ENCODE measurements at regions of chr19 and their contacts with region 1.

Region 1: DNA sequence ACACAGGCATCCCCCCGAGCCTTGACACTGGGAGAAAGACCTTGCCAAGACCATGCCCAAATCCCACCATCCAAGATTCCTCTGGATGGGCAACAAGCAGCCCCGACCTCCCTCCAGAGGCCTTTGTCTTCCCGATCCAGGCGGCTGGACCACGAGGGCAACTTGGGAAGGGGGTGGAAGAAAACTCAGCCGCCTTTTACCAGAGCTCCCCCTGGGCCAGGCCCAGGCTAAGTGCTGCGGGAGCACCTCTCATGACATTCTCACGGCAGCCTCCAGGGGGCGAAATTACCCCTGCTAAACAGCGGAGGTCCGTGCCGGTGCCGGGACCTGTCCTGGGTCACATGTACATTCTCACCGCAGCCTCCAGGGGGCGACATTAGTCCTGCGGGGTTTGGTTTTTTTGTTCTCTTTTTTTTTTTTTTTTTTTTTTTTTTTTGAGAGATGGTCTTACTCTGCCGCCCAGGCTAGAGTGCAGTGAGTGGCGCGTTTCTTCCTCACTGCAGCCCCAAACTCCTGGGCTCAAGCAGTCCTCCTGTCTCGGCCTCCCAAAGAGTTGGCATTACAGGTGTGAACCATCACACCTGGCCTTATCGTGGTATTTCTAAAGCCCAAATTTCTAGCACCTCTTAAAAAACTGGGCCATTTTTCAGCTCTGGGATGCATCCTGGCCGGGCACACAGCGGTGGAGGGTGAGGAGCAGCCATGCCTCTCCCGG is 2.1 kb upstream of the RSPH6A start:
- DNase-seq: peak; percentile 97
- ATAC-seq: peak; percentile 98
- H3K4me3 Mint-ChIP-seq: no peak overlapping the region
- H3K27ac Mint-ChIP-seq: no peak overlapping the region
- H3K4me1 Mint-ChIP-seq: peaks cover 6% of the 10 kb centered on the region
- H3K27me3 Mint-ChIP-seq: no peaks in the 10 kb centered on the region

Region 2: DNA sequence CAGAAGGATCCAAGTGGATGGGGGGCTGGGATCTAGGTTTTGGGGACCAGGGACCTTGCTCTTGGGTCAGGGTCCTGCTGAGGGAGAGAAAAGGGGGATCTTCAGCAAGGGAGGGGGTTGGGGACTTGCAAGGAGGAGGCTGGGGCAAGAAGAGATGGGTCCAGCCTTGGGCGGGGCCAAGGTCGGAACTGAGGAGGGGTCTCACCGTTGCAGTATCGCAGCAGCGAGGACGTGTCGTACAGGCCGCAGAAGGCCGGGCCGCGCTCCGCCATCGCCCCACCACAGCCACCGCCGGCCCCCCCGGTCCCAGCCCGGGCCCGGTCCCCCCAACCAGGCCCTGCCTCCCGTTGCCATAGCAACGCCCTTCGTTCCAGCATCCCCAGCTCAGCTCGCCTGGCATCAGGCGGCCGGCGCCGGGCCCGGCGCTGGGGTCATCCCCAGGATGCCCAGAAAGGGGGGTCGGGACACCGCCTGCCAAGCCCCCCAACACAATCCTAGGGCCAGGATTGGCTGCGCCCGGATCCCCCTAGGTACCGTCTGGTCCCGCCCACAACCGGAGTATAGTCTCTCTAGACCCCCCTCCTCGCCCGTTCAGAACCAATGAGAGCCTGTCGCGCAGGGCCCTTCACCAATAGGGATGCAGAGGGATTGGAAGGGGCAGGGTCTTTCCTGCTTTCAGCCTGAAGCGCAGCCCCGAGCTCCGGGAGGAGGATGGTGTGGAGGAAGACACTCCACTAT is 171.9 kb before region 1 on chr19:
- CTCF ChIA-PET with region 1: no interaction called
- DNase-seq: peak; percentile 93
- ATAC-seq: peak; percentile 57
- H3K4me3 Mint-ChIP-seq: peak overlapping the region; percentile 78
- H3K27ac Mint-ChIP-seq: peak overlapping the region; percentile 79
- H3K4me1 Mint-ChIP-seq: peaks cover 36% of the 10 kb centered on the region
- H3K27me3 Mint-ChIP-seq: no peaks in the 10 kb centered on the region

Region 3: DNA sequence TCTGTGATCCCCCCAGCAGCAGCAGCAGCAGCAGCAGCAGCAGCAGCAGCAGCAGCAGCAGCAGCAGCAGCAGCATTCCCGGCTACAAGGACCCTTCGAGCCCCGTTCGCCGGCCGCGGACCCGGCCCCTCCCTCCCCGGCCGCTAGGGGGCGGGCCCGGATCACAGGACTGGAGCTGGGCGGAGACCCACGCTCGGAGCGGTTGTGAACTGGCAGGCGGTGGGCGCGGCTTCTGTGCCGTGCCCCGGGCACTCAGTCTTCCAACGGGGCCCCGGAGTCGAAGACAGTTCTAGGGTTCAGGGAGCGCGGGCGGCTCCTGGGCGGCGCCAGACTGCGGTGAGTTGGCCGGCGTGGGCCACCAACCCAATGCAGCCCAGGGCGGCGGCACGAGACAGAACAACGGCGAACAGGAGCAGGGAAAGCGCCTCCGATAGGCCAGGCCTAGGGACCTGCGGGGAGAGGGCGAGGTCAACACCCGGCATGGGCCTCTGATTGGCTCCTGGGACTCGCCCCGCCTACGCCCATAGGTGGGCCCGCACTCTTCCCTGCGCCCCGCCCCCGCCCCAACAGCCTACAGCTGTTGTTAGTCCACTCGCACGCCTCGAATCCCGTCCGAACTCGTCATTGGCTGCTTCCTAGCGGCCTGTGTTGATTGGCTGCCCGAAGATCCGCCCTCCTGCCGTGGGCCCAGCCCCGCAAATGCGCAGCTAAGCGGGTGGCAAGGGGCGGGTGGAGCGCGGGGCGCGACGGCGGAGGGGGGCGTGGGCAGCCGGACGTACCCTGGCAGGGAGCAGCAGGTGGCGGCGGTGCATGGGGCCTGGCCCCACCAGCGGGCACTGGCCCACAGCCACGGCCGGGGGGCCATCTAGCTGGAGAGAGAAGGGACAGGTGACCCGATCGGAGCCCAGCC is 46.7 kb before region 1 on chr19:
- CTCF ChIA-PET with region 1: interaction called, 41 read pairs
- DNase-seq: peak; percentile 92
- ATAC-seq: peak; percentile 73
- H3K4me3 Mint-ChIP-seq: peak overlapping the region; percentile 78
- H3K27ac Mint-ChIP-seq: peak overlapping the region; percentile 84
- H3K4me1 Mint-ChIP-seq: peaks cover 13% of the 10 kb centered on the region
- H3K27me3 Mint-ChIP-seq: peaks cover 12% of the 10 kb centered on the region

Region 4: GRCh38 chr19:45798995-45799517 is 18.1 kb before region 1 on chr19:
- CTCF ChIA-PET with region 1: interaction called, 27 read pairs
- DNase-seq: peak; percentile 64
- ATAC-seq: peak; percentile 82
- H3K4me3 Mint-ChIP-seq: no peak overlapping the region
- H3K27ac Mint-ChIP-seq: no peak overlapping the region
- H3K4me1 Mint-ChIP-seq: peaks cover 6% of the 10 kb centered on the region
- H3K27me3 Mint-ChIP-seq: peaks cover 42% of the 10 kb centered on the region

Region 5: DNA sequence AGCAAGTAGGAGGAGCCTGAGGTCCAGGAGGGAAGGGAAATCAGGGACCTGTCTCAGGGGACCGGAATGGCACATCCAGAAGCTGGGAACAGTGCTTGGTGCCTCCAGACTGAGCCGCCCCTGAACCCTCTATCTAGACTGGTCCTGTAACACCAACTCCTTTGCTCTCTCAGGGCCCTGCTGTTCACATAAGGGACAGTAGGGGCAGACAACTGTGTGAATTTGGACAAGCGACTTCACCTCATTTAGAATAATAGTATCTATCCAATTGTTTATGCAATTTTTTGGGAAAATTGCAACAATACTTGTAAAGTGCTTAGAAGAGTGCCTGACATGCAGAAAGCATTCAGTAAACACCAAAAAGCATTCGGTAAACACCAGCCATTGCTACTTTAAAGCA is 31.8 kb after region 1 on chr19:
- CTCF ChIA-PET with region 1: interaction called, 11 read pairs
- DNase-seq: no peak
- ATAC-seq: no peak
- H3K4me3 Mint-ChIP-seq: no peak overlapping the region
- H3K27ac Mint-ChIP-seq: no peak overlapping the region
- H3K4me1 Mint-ChIP-seq: no peaks in the 10 kb centered on the region
- H3K27me3 Mint-ChIP-seq: no peaks in the 10 kb centered on the region

Region 6: GRCh38 chr19:45862564-45863334 is 45.6 kb after region 1 on chr19 and contains the start of gene SYMPK:
- CTCF ChIA-PET with region 1: interaction called, 16 read pairs
- DNase-seq: peak; percentile 100
- ATAC-seq: peak; percentile 96
- H3K4me3 Mint-ChIP-seq: peak within 1 kb of the TSS; percentile 98
- H3K27ac Mint-ChIP-seq: peak within 1 kb of the TSS; percentile 99
- H3K4me1 Mint-ChIP-seq: peaks cover 36% of the 10 kb centered on the region
- H3K27me3 Mint-ChIP-seq: peaks cover 34% of the 10 kb centered on the region
- total RNA-seq, gene SYMPK: 119 to 125 TPM

Region 7: DNA sequence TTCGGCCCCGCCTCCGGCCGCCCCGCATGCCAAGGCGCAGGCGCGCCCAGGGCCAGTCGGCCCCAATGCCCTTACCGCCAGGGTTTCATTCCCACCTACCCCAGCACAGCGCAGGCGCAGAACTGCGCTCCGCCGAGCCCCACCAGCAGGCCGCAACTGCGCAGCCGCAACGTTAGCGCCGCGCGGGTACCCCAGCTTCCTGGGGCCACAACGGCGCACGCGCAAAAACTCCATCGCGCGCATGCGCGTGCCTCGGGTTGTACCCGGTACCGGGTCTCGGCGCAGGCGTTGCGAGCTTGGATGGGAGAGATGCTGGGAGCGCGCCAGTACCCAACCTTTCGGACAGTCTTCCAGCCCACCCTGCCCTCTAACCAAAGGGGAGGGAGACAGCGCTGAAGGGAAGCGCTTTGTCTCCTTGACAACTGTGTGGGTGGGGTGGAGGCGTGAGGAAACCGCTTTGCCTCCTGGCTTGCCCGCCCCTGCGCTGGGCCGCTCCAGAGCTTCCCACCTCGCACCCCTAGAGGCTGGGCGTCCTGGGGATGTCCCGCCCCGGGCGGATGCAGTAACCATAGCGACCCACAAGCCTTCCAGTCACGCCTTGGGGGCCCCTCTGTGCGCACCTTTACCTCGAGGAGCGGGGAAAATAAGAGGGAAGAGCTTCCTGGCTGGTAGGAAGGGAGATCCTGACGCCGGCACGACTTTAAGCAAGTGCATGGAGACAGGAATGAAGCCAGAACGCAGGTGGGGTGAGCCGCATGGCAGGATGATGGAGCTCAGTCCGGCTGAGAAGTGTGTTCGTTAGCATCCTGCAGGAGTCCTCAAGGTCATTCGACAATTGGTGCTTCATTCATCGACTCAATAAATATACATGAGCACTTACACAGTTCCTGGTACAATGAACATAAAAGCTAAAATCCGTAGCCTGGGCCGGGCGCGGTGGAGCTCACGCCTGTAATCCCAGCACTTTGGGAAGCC is 85.8 kb after region 1 on chr19:
- CTCF ChIA-PET with region 1: interaction called, 12 read pairs
- DNase-seq: peak; percentile 99
- ATAC-seq: peak; percentile 90
- H3K4me3 Mint-ChIP-seq: peak overlapping the region; percentile 92
- H3K27ac Mint-ChIP-seq: peak overlapping the region; percentile 84
- H3K4me1 Mint-ChIP-seq: peaks cover 21% of the 10 kb centered on the region
- H3K27me3 Mint-ChIP-seq: no peaks in the 10 kb centered on the region

Region 8: GRCh38 chr19:45960595-45961235 is 143.5 kb after region 1 on chr19:
- CTCF ChIA-PET with region 1: no interaction called
- DNase-seq: no peak
- ATAC-seq: peak; percentile 16
- H3K4me3 Mint-ChIP-seq: no peak overlapping the region
- H3K27ac Mint-ChIP-seq: no peak overlapping the region
- H3K4me1 Mint-ChIP-seq: peaks cover 2% of the 10 kb centered on the region
- H3K27me3 Mint-ChIP-seq: peaks cover 37% of the 10 kb centered on the region

Measured in activated CD8-positive, alpha-beta memory T cell treated with anti-CD3 and anti-CD28 coated beads, Interleukin-2, amount 10 ng/mL, durations not matched to agents 7 days and 5 days (primary cell).